Activated CD8-positive, alpha-beta T cell treated with anti-CD3 and anti-CD28 coated beads for 36 hours (primary cell): ENCODE measurements at regions of chr20 and their contacts with region 1.

Region 1: GRCh38 chr20:1764136-1765033 is 106.8 kb upstream of the SIRPG start:
- DNase-seq: peak; percentile 84
- ATAC-seq: peak; percentile 94
- H3K4me3 Mint-ChIP-seq: no peak overlapping the region
- H3K27ac Mint-ChIP-seq: no peak overlapping the region
- H3K4me1 Mint-ChIP-seq: no peaks in the 10 kb centered on the region
- H3K27me3 Mint-ChIP-seq: no peaks in the 10 kb centered on the region
- CTCF ChIP-seq: peak; percentile 88

Region 2: GRCh38 chr20:1509237-1509636 is 255.1 kb before region 1 on chr20:
- CTCF ChIA-PET with region 1: interaction called, 25 read pairs
- POLR2A ChIA-PET with region 1: no interaction called
- intact Hi-C with region 1: no loop called
- DNase-seq: peak; percentile 58
- ATAC-seq: peak; percentile 74
- H3K4me3 Mint-ChIP-seq: no peak overlapping the region
- H3K27ac Mint-ChIP-seq: no peak overlapping the region
- H3K4me1 Mint-ChIP-seq: no peaks in the 10 kb centered on the region
- H3K27me3 Mint-ChIP-seq: peaks cover 8% of the 10 kb centered on the region
- CTCF ChIP-seq: peak; percentile 32

Region 3: DNA sequence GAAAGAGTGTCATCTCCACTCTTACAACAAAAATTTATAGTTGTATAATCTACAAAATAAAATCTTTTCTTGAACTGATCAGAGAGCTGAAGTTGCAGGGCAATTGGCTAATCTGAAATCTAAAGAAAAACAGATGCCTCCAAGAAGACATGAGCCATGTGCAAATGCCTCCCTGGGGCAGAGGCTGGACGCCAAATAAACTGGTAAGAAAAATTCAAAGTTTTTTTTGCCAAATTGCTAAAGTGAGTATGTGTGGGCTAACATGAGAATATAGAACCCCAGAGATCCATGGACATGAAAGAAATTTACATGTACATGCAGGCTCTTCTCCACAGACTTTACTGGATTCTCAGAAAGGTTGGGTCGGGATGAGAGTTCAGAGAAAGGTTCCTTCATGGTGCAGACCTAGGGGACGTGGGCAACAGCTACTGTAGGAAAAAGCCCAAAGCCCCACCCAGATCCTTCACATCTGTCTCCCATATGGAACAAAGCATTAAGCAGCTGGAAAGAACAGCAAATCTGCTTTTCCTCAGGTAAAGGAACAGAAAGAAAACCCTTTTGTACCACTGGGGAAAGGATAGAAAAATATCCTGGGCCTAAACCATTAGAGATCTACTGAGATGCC is 16.3 kb before region 1 on chr20:
- CTCF ChIA-PET with region 1: interaction called, 11 read pairs
- POLR2A ChIA-PET with region 1: interaction called, 3 read pairs
- intact Hi-C with region 1: no loop called
- DNase-seq: no peak
- ATAC-seq: no peak
- H3K4me3 Mint-ChIP-seq: no peak overlapping the region
- H3K27ac Mint-ChIP-seq: no peak overlapping the region
- H3K4me1 Mint-ChIP-seq: no peaks in the 10 kb centered on the region
- H3K27me3 Mint-ChIP-seq: no peaks in the 10 kb centered on the region
- CTCF ChIP-seq: no peak

Region 4: DNA sequence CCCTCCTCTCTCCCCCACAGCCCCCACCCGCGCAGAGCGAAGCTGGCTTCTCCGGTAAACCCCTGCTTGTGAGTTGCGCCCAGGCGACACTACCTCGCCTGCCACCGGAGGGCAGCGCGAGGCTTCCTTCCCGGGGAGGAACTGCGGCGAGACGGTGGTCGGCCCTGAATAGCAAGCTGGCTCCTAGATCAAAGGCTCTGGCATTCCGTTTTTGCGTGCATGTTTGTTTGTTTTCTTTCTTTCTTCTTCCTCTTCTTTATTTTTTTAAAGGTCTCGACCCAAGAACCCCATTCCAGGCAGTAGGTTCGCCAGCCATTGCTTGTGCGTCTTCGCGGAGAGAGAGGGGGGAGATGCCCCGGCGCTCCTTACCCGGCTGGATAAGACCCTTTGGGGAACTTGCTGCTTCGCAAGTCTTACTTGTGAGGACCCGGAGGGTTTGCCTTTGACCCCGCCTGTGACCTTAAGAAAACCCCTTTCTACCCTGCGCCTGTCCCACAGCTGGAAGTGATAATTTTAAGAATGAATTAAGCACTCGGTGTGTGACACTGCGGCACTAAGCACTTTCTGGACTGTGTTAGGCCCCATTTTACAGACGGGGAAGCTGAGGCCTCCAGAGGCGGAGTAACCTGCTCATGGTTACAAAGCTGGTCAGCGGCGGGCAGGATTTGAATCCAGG is 38.1 kb after region 1 on chr20:
- CTCF ChIA-PET with region 1: interaction called, 25 read pairs
- POLR2A ChIA-PET with region 1: no interaction called
- intact Hi-C with region 1: no loop called
- DNase-seq: peak; percentile 66
- ATAC-seq: peak; percentile 87
- H3K4me3 Mint-ChIP-seq: peak overlapping the region; percentile 53
- H3K27ac Mint-ChIP-seq: no peak overlapping the region
- H3K4me1 Mint-ChIP-seq: peaks cover 6% of the 10 kb centered on the region
- H3K27me3 Mint-ChIP-seq: peaks cover 50% of the 10 kb centered on the region
- CTCF ChIP-seq: peak; percentile 68

Region 5: DNA sequence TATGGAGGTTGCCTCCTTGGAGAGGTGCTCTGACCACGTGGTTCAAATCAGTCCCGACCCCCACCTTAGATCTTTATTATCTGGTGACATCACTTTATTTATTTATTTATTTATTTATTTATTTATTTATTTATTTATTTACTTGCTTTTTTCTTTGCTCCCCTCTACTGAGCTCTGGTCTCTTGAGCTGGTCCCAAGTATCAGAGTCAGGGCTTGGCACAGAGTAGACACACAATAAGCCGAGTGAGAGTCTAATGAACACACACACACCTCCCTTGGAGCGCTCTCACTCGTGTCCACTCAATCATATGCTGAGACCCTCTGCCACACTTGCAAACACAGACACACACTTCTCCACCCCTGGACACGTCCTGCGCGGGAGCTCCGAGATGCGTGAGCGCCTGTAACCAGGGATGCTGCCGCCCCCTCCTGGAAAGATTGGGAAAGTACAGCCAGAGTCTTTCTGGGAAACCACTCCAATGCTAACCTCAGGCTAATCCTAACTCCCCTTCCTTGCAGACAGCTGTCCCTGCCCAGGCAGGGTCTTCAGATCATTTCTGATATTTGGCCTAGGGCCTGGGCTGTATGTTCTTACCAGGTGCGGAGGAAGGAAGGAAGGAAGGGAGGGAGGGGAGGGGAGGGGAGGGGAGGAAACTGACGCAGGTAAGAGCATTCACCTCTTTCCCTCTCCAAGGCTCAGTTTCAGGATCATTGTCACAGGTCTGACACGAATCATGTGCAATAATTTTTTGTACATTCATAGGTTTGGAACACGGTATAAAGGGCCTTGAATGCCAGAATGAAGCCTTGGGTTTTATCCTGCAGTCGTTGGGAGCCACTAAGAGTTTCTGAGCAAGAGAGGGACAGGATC is 408.2 kb after region 1 on chr20:
- CTCF ChIA-PET with region 1: interaction called, 10 read pairs
- POLR2A ChIA-PET with region 1: no interaction called
- intact Hi-C with region 1: no loop called
- DNase-seq: peak; percentile 76
- ATAC-seq: peak; percentile 81
- H3K4me3 Mint-ChIP-seq: no peak overlapping the region
- H3K27ac Mint-ChIP-seq: no peak overlapping the region
- H3K4me1 Mint-ChIP-seq: peaks cover 2% of the 10 kb centered on the region
- H3K27me3 Mint-ChIP-seq: peaks cover 13% of the 10 kb centered on the region
- CTCF ChIP-seq: peak; percentile 90